ENCODE measurements at regions of chr10 and their contacts with region 1.

Region 1: GRCh38 chr10:97676770-97677581 is 10.1 kb downstream of the AVPI1 start:
- DNase-seq: peak; percentile 50
- H3K4me3 Mint-ChIP-seq: no peak overlapping the region
- H3K27ac Mint-ChIP-seq: peak overlapping the region; percentile 54
- H3K4me1 Mint-ChIP-seq: peaks cover 13% of the 10 kb centered on the region
- H3K27me3 Mint-ChIP-seq: no peaks in the 10 kb centered on the region

Region 2: DNA sequence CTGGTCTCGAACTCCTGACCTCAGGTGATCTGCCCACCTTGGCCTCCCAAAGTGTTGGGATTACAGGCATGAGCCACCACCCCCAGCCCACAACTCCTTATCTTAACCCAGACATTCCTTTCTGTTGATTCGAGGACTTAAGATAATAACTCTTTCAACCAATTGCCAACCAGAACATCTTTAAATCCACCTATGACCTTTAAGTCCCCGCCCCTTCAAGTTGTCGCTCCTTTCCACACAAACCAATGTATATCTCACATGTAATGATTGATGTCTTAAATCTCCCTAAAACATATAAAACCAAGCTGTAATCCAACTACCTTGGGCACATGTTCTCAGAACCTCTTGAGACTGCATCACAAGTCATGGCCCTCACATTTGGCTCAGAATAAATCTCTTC is 112.2 kb before region 1 on chr10:
- CTCF ChIA-PET with region 1: no interaction called
- POLR2A ChIA-PET with region 1: no interaction called
- DNase-seq: no peak
- H3K4me3 Mint-ChIP-seq: no peak overlapping the region
- H3K27ac Mint-ChIP-seq: no peak overlapping the region
- H3K4me1 Mint-ChIP-seq: peaks cover 3% of the 10 kb centered on the region
- H3K27me3 Mint-ChIP-seq: no peaks in the 10 kb centered on the region

Region 3: DNA sequence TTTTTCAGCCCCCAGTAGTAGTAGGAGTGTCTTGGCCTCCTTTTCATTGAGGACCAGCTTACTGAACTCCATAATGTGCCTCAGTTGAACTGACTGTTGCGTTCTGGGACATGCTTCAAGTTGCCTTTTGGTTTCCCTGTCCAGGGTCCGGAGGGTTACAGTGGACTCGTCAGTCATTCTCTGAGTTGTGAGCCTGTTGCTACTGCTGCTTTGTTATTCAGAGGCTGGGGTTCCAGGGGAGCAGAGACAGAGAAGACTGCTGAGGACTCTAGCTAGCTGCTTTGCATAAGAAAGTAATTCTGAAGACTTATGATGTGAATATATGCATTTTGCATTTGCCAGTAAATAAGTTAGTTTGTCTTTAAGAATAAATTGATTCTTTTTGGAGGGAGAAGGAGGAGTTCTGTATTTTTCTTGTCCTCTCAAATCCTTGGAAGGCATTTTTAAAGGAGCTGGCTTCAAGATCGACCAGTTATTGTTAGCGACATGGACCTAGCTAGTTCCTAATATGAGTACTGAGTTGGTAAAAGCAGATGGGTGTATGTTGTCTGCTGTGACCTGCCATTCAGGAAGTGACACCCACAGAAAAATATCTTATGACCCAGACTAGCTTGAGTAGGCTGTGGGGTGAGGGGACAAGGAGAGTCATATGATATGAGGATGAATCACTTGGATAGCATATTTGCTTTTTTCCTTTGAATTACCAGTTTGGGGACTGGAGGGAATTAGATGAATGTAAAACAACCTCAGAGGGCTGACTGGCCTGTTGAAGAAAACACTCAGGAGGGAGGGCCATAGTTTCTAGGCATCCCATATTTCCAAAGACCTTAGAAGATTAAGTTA is 28.2 kb before region 1 on chr10:
- CTCF ChIA-PET with region 1: interaction called, 4 read pairs
- POLR2A ChIA-PET with region 1: interaction called, 13 read pairs
- DNase-seq: peak; percentile 25
- H3K4me3 Mint-ChIP-seq: no peak overlapping the region
- H3K27ac Mint-ChIP-seq: peak overlapping the region; percentile 74
- H3K4me1 Mint-ChIP-seq: peaks cover 14% of the 10 kb centered on the region
- H3K27me3 Mint-ChIP-seq: no peaks in the 10 kb centered on the region

Region 4: DNA sequence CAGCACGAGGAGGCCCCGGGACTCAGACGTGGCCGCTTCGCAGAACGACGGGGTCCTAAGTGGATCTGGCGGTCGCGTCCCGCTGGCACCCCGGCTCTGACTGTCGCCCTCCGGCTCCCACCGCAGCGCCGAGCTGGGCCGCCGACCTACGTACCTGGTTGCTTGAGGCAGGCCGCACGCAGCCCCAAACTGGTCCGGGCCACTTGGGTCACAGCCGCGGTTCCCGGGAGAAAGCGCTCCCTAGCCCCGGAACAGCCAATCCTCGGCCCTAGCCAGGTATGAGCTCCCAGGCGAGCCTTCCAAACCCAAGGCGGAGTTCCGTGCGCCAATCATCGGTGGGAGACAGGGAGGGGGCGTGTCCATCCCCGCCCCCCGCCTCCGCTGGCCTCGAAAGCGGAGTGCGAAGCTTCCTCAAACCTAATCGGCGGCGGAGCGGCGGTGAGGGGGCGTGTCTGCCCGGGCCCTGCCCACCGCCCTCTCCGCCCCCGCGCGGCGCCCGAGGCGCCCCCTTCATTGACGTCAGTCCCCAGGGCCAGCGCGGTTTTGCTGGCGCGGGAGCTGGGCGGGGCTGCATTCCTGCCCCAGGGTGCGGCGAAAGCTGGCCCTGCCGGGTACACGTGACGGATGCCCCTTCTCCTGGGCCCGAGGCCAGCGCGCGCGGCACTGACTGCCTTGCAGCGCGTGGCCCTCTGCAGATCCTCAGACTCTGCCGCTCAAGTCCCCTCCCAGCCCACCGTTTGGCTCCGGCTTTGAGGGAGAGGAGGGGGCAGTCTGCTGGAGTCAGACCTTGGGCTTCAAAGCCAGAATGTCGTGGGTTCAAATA is 10.2 kb after region 1 on chr10 and contains the start of gene AVPI1:
- CTCF ChIA-PET with region 1: interaction called, 34 read pairs
- POLR2A ChIA-PET with region 1: no interaction called
- DNase-seq: peak; percentile 93
- H3K4me3 Mint-ChIP-seq: peak within 1 kb of the TSS; percentile 76
- H3K27ac Mint-ChIP-seq: peak within 1 kb of the TSS; percentile 76
- H3K4me1 Mint-ChIP-seq: peaks cover 13% of the 10 kb centered on the region
- H3K27me3 Mint-ChIP-seq: no peaks in the 10 kb centered on the region
- total RNA-seq, gene AVPI1: 0.58 to 0.94 TPM

Measured in activated CD4-positive, alpha-beta T cell treated with anti-CD3 and anti-CD28 coated beads, Interleukin-2, amount 10 ng/mL, durations not matched to agents 7 days and 5 days (primary cell).